Sciatic nerve (tissue), 2 donors: ENCODE measurements at regions of chr3 and their contacts with region 1.

Region 1: GRCh38 chr3:123201566-123202427 is at the start of gene SEC22A:
- DNase-seq: peak; percentile 95
- ATAC-seq: peak; percentile 99
- total RNA-seq, gene SEC22A: 16.2 TPM

Region 2: GRCh38 chr3:123180799-123181198 is 21.0 kb before region 1 on chr3:
- intact Hi-C with region 1: loop called (anchors 1 kb)
- DNase-seq: no peak
- ATAC-seq: no peak

Region 3: DNA sequence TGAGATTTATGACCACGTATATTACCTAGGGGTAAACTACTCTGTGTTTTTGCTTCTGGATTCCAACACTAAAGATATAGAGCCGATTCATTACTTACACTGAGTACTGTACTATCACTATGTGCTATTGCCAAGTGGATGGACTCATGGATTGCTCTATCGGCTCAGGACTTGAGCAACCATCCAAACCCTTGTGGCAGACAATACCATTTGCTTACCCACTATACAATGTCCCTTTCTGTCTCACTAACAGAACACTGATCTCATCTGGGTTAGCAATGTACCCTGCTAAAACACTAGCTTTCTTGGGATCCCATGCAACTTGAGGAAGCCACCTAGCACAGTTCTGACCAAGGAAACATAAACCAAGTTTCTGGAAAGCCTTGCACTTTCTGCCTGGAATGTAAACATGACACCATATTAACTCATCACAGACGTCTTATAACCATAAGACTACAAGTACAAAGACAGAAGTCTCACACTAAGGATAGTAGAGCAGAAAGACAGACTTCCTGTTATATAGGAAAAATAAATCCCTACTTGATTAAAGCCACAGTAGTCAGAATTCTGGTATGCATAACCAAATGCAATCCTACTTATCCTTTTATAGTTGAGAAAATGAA is 344.4 kb after region 1 on chr3:
- intact Hi-C with region 1: no loop called
- DNase-seq: no peak
- ATAC-seq: no peak